HCT116 (cell line): ENCODE measurements at regions of chr14 and their contacts with region 1.

Region 1: DNA sequence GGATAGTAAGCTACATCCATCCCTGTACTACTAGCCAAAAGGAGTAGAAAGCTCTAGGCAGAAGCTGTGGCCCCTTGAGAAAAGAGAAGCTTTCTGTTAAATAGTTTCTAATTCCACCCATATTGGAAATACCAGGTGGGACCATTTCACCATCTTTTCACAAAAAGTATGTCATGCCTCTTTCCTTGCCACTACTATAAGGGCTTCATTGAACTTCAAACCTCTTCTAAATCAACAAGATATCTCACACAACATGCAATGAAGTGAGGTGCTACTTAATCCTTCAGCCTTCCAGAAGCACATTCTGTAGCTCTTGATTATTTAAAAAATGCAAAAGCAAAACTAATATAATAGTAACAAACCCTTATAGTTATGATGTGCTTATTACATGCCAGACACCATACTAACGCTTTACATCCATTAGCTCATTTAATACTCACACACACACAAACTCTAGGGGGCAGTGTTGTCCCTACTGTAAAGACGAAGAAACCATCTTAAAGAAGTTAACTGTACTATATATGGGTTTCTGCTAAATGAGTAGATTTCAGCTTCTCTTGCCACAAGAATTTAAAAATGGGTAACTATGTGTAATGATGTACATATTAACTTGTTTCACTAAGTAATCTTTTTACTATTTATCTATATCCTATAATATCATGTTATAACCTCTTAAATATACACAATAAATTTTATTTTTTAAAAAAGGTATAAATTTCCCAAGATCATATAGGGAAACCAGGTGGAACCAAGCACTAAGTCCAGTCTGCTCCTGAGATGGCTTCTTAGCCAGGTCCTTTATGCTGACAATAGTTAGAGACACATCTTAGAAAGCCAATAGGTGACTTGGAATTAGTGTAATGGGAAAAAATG is 124.4 kb downstream of the RPS29 start:
- DNase-seq: peak; percentile 78
- ATAC-seq: peak; percentile 94
- H3K4me3 ChIP-seq: no peak overlapping the region
- H3K27ac ChIP-seq: no peak overlapping the region
- H3K4me1 ChIP-seq: no peaks in the 10 kb centered on the region
- H3K27me3 ChIP-seq: no peaks in the 10 kb centered on the region
- CTCF ChIP-seq: peak; percentile 56 to 85 (median 74); a peak in 5 of 6 replicates
- POLR2A ChIP-seq: no peak
- RAD21 ChIP-seq: peak; percentile 71

Region 2: GRCh38 chr14:49438256-49438770 is 23.5 kb before region 1 on chr14:
- CTCF ChIA-PET with region 1: interaction called, 11 read pairs
- POLR2A ChIA-PET with region 1: no interaction called
- RAD21 ChIA-PET with region 1: no interaction called
- intact Hi-C with region 1: no loop called
- DNase-seq: no peak
- ATAC-seq: no peak
- H3K4me3 ChIP-seq: no peak overlapping the region
- H3K27ac ChIP-seq: no peak overlapping the region
- H3K4me1 ChIP-seq: no peaks in the 10 kb centered on the region
- H3K27me3 ChIP-seq: peaks cover 16% of the 10 kb centered on the region; the same call in 1 of the 2 replicates
- CTCF ChIP-seq: no peak
- POLR2A ChIP-seq: no peak
- RAD21 ChIP-seq: no peak

Region 3: DNA sequence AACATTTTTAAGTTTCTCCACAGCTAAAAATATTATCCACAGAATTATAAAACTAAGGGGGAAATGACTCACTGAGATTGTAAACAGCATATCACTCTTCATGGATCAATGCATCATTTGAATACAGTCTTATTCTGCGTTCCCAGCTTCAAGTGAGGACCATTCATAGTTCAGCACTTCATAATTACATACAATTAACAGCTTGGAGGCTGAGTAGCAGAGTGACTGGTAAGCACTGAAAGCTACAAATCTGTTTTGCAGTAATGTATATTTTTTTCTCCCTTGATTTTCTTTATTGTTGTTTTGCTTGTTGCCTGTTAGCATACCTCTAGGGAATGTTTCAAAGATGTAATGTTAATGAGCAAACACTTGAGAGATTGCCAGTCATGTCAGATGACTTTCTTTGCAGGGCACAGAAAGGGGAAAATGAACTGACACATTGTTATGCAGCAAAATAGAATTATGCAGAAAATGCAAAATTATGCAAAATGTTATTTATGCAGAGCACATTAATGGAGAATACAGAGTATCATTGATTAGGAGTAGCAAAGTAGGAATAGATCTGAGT is 14.1 kb before region 1 on chr14:
- CTCF ChIA-PET with region 1: interaction called, 32 read pairs
- POLR2A ChIA-PET with region 1: no interaction called
- RAD21 ChIA-PET with region 1: no interaction called
- intact Hi-C with region 1: no loop called
- DNase-seq: no peak
- ATAC-seq: no peak
- H3K4me3 ChIP-seq: no peak overlapping the region
- H3K27ac ChIP-seq: no peak overlapping the region
- H3K4me1 ChIP-seq: no peaks in the 10 kb centered on the region
- H3K27me3 ChIP-seq: no peaks in the 10 kb centered on the region
- CTCF ChIP-seq: no peak
- POLR2A ChIP-seq: no peak
- RAD21 ChIP-seq: no peak

Region 4: GRCh38 chr14:49479432-49479831 is 17.7 kb after region 1 on chr14:
- CTCF ChIA-PET with region 1: interaction called, 24 read pairs
- POLR2A ChIA-PET with region 1: no interaction called
- RAD21 ChIA-PET with region 1: no interaction called
- intact Hi-C with region 1: no loop called
- DNase-seq: no peak
- ATAC-seq: no peak
- H3K4me3 ChIP-seq: no peak overlapping the region
- H3K27ac ChIP-seq: no peak overlapping the region
- H3K4me1 ChIP-seq: no peaks in the 10 kb centered on the region
- H3K27me3 ChIP-seq: no peaks in the 10 kb centered on the region
- CTCF ChIP-seq: no peak
- POLR2A ChIP-seq: no peak
- RAD21 ChIP-seq: no peak

Region 5: DNA sequence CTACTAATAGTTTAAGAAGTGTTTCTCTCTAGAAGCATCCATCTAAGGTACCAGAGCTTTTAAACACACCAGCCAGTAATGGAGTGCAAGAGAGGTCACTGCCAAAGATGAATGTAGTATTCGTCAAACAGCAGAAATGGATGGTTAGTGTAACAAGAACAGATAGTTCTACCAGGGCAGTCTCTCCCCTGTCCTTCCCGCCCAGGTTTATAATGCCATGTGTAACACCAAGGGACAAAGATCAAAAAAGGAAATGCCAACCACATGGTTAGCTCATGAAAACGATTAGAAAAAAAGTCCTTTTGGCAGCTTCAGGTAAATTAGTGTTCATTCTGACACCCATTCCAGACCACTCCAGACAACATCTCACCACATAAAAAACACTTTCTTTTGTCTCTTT is 23.5 kb after region 1 on chr14:
- CTCF ChIA-PET with region 1: interaction called, 13 read pairs
- POLR2A ChIA-PET with region 1: no interaction called
- RAD21 ChIA-PET with region 1: no interaction called
- intact Hi-C with region 1: no loop called
- DNase-seq: no peak
- ATAC-seq: no peak
- H3K4me3 ChIP-seq: no peak overlapping the region
- H3K27ac ChIP-seq: no peak overlapping the region
- H3K4me1 ChIP-seq: no peaks in the 10 kb centered on the region
- H3K27me3 ChIP-seq: no peaks in the 10 kb centered on the region
- CTCF ChIP-seq: no peak
- POLR2A ChIP-seq: no peak
- RAD21 ChIP-seq: no peak

Region 6: GRCh38 chr14:49497725-49498348 is 36.1 kb after region 1 on chr14:
- CTCF ChIA-PET with region 1: interaction called, 45 read pairs
- POLR2A ChIA-PET with region 1: no interaction called
- RAD21 ChIA-PET with region 1: interaction called, 3 to 5 read pairs
- intact Hi-C with region 1: loop called (anchors 2 kb)
- DNase-seq: peak; percentile 72
- ATAC-seq: peak; percentile 89
- H3K4me3 ChIP-seq: no peak overlapping the region
- H3K27ac ChIP-seq: no peak overlapping the region
- H3K4me1 ChIP-seq: no peaks in the 10 kb centered on the region
- H3K27me3 ChIP-seq: no peaks in the 10 kb centered on the region
- CTCF ChIP-seq: peak; percentile 41 to 92 (median 75); a peak in 5 of 6 replicates
- POLR2A ChIP-seq: no peak
- RAD21 ChIP-seq: peak; percentile 72

Region 7: GRCh38 chr14:49550286-49551184 is 88.8 kb after region 1 on chr14:
- CTCF ChIA-PET with region 1: interaction called, 43 read pairs
- POLR2A ChIA-PET with region 1: no interaction called
- RAD21 ChIA-PET with region 1: interaction called in 1 of 2 experiments, 6 read pairs
- intact Hi-C with region 1: no loop called
- DNase-seq: peak; percentile 8
- ATAC-seq: peak; percentile 66
- H3K4me3 ChIP-seq: no peak overlapping the region
- H3K27ac ChIP-seq: no peak overlapping the region
- H3K4me1 ChIP-seq: peaks cover 0 to 12% of the 10 kb centered on the region in 2 experiments; a peak in 3 of 4 replicates
- H3K27me3 ChIP-seq: no peaks in the 10 kb centered on the region
- CTCF ChIP-seq: peak; percentile 24 to 59 (median 43); a peak in 4 of 6 replicates
- POLR2A ChIP-seq: no peak
- RAD21 ChIP-seq: peak; percentile 60